A673 (cell line): ENCODE measurements at regions of chr18 and their contacts with region 1.

Region 1: GRCh38 chr18:13464432-13465123 is 246.0 kb downstream of the LDLRAD4 start:
- DNase-seq: peak; percentile 95
- H3K4me3 ChIP-seq: peak overlapping the region; percentile 2
- H3K27ac ChIP-seq: peak overlapping the region; percentile 56
- H3K4me1 ChIP-seq: peaks cover 27% of the 10 kb centered on the region
- H3K27me3 ChIP-seq: no peaks in the 10 kb centered on the region
- CTCF ChIP-seq: no peak; the same call in 1 of the 2 replicates

Region 2: DNA sequence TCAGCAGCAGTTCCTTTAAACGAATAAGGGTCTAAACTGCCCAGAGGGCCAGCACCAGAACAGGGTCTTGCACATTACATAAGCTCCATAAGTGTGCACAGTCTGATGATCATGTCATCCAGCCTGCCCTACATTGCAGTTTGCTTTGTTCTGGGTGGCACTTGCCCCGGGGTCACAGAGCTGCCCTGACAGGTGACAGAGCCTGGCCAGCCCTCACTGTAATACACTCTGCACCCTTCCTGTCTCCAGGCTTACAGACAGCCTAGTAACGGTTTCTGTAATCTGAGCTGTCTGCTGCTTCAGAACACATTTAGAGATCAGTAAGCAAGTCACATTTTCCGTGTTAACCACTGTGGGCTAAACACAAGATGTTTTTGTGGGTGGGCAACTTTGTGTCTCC is 48.4 kb after region 1 on chr18:
- CTCF ChIA-PET with region 1: no interaction called
- POLR2A ChIA-PET with region 1: no interaction called
- intact Hi-C with region 1: loop called (anchors 10 kb)
- DNase-seq: no peak
- H3K4me3 ChIP-seq: no peak overlapping the region
- H3K27ac ChIP-seq: no peak overlapping the region
- H3K4me1 ChIP-seq: no peaks in the 10 kb centered on the region
- H3K27me3 ChIP-seq: no peaks in the 10 kb centered on the region
- CTCF ChIP-seq: no peak

Region 3: DNA sequence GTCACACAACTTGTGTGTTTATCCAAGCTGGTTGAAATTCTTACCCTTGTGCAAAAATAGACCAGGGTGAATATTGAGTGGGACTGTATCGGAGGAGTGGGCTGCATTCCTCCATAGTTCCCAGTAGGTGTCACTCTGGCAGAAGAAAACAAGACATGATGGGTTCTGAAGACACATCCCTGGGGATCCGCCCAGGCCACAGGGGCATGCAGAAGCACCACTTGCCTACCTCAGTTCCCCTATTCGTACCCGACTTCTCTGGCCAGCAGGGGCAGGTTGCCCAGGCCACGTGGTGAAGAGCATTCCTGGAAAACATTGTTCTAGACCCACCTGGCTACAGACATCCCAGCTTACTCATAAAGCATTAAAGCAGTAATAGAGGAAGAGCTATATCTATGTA is 93.5 kb after region 1 on chr18:
- CTCF ChIA-PET with region 1: no interaction called
- POLR2A ChIA-PET with region 1: no interaction called
- intact Hi-C with region 1: no loop called
- DNase-seq: peak; percentile 68
- H3K4me3 ChIP-seq: no peak overlapping the region
- H3K27ac ChIP-seq: no peak overlapping the region
- H3K4me1 ChIP-seq: no peaks in the 10 kb centered on the region
- H3K27me3 ChIP-seq: peaks cover 13% of the 10 kb centered on the region
- CTCF ChIP-seq: peak; percentile 76

Region 4: DNA sequence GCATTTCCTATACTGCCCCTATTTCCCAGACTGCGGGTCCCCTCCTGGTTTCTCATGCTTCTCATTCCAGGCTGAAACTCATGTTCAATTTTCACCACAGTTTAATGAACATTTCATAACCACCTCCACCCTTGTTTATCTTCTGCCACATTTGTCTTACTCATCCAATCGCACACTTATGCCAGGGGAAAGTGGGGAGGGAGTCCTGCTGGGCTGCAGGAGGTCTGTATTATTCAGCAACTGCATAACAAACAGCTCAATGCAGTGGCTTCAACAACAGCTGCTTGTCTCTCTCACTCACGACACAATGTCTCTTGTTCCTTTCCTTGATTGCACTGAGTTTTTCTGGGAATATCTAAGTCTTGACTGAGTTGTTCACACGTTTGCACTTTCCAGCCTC is 561.6 kb after region 1 on chr18:
- CTCF ChIA-PET with region 1: no interaction called
- POLR2A ChIA-PET with region 1: no interaction called
- intact Hi-C with region 1: no loop called
- DNase-seq: no peak
- H3K4me3 ChIP-seq: no peak overlapping the region
- H3K27ac ChIP-seq: no peak overlapping the region
- H3K4me1 ChIP-seq: no peaks in the 10 kb centered on the region
- H3K27me3 ChIP-seq: peaks cover 28% of the 10 kb centered on the region
- CTCF ChIP-seq: no peak